ENCODE measurements at regions of chr12 and their contacts with region 1.

Region 1: DNA sequence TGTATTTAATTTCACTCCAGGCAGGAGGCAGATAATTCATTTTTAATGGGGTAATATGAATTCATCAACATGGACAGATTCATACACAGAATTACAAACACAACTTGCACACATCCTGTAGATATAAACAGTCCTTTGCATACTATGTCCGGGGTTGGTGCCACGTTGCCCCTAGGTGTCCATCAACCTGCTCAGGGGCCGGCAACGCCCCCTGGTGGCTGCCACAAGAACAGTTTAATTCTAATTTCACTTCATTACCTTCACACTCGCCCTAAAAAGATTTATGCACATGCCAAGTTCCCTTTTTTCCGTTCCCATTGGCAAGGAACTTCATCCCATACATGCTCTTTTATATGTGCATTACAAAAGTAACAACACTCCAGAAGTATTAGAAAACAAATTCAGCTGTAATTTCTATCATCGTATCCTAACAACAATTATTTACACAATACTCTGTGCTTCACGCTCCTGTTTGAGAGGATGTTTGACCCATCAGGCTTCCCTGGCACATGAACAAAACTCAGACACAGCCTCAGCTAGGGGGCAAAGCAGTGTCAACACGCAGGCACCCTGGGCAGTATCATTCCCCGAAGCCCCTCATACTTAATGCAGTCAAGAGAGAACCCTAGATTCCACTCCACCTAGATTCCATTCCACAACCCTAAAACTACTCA is 15.5 kb downstream of the MANSC1 start:
- DNase-seq: peak; percentile 67 to 70 (median 68)
- ATAC-seq: peak; percentile 72 to 81 (median 74)
- H3K4me3 ChIP-seq: no peak overlapping the region
- H3K27ac ChIP-seq: no peak overlapping the region
- H3K4me1 ChIP-seq: peaks cover 0 to 27% (median 2%) of the 10 kb centered on the region in 4 donors
- H3K27me3 ChIP-seq: no peaks in the 10 kb centered on the region
- CTCF ChIP-seq: peak; percentile 71 to 94 (median 92)
- POLR2A ChIP-seq: no peak

Region 2: DNA sequence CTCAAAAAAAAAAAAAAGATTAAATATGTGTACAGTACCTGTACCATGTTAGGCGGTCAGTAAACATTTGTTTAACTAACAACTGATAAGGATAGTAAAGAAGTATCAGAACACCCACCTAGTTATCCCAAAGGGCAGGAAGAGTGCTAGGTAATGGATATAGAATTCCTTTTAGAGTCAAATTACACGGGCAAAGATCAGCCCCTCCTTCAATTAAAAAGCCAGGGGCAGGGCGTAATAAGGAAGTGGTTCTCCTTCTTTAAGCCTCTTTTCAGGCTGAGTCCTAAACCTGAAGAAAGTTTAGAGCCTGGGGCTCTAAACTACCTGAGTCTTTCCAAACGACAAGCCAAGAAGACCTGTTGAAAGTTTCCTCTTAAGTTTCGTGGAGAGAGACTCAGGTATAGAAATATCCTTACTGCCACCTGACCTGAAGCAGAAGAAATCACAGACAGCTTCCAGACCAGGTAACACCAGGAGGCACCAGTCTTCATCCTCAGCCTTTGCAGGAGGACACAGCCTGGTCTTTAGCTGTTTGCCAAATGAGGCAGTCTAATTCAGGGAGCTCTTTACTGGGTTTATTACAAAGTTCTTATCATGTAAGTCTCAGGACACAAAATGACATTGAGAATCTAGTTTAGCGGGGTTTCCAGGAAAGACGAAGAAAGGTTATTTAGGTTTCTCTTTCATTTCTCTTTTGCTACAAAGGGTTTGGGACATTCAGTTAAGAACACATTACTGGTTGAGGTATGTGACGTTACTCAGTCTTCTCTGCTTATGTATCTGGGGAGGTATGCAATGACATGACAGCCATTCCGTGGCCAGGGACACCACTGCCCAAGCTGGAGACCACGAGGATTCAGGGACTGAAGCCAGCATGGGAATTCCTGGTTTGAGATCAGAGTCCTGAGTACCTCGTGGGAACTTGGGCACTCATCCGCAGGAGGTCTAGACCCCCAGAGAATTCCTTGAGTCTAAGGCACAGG is 263.5 kb before region 1 on chr12 and contains the start of gene BCL2L14:
- intact Hi-C with region 1: loop called in 1 of 2 experiments (anchors 10 kb)
- DNase-seq: no peak
- ATAC-seq: peak; percentile 53 to 69 (median 64)
- H3K4me3 ChIP-seq: peak within 1 kb of the TSS; percentile 30 to 44 (median 43)
- H3K27ac ChIP-seq: no peak within 1 kb of the TSS
- H3K4me1 ChIP-seq: peaks cover 0 to 9% (median 0%) of the 10 kb centered on the region in 4 donors
- H3K27me3 ChIP-seq: no peaks in the 10 kb centered on the region
- CTCF ChIP-seq: peak in 2 of 4 donors; percentile 14 to 19
- POLR2A ChIP-seq: no peak
- total RNA-seq, gene BCL2L14: 0.14 to 1.1 TPM in 2 of 6 experiments, not detected in the others

Region 3: GRCh38 chr12:12081836-12082497 is 252.5 kb before region 1 on chr12:
- intact Hi-C with region 1: loop called (anchors 10 kb)
- DNase-seq: peak in 1 of 3 donors; percentile 26
- ATAC-seq: peak; percentile 75 to 87 (median 82)
- H3K4me3 ChIP-seq: no peak overlapping the region
- H3K27ac ChIP-seq: peak overlapping the region; percentile 29 to 61 (median 54)
- H3K4me1 ChIP-seq: peaks cover 0 to 10% (median 0%) of the 10 kb centered on the region in 4 donors
- H3K27me3 ChIP-seq: no peaks in the 10 kb centered on the region
- CTCF ChIP-seq: peak; percentile 25 to 38 (median 34)
- POLR2A ChIP-seq: no peak

Region 4: GRCh38 chr12:12126551-12126950 is 208.0 kb before region 1 on chr12:
- intact Hi-C with region 1: no loop called
- DNase-seq: no peak
- ATAC-seq: no peak
- H3K4me3 ChIP-seq: no peak overlapping the region
- H3K27ac ChIP-seq: no peak overlapping the region
- H3K4me1 ChIP-seq: no peaks in the 10 kb centered on the region
- H3K27me3 ChIP-seq: no peaks in the 10 kb centered on the region
- CTCF ChIP-seq: no peak
- POLR2A ChIP-seq: no peak

Region 5: GRCh38 chr12:12290206-12290605 is 44.3 kb before region 1 on chr12:
- intact Hi-C with region 1: no loop called
- DNase-seq: no peak
- ATAC-seq: no peak
- H3K4me3 ChIP-seq: no peak overlapping the region
- H3K27ac ChIP-seq: no peak overlapping the region
- H3K4me1 ChIP-seq: peaks cover 0 to 21% (median 4%) of the 10 kb centered on the region in 4 donors
- H3K27me3 ChIP-seq: no peaks in the 10 kb centered on the region
- CTCF ChIP-seq: no peak
- POLR2A ChIP-seq: no peak